A549 (cell line): ENCODE measurements at regions of chr6 and their contacts with region 1.

Region 1: DNA sequence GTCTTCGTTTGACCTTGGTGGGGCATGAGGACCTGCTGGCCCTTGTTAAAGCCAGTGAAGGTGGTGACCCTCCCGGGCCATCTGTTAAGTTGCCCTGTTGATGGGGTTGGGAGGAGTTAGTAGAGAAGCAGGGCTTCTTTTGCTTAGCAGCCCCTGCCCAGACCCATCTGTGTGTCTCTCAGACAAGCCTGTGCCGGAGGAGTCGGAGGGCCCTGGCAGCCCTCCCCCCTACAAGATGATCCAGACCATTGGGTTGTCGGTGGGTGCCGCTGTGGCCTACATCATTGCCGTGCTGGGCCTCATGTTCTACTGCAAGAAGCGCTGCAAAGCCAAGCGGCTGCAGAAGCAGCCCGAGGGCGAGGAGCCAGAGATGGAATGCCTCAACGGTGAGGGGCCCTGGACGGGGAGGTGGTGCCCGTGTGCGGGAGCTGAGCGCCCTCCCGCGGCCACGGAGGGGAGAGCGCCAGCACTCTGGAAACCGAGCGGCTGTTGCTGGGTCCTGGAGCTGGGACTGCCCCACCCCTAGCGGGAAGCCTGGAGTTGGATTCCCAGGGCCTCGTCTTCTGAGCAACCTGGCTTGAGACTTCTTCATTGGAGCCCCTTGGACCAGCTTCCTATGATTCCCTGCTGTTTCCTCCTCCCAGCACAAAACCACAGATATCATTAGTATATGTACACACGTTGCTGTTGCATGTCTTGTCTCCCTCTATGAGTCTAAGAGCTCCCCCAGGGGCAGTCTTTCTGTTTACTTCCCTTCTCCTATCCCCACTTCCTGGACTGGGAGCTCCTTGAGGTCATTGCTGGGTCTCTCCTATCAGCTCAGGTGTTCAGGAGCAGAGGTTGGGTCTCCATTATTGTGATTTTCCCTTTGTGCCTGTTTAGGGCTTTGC is 27.6 kb upstream of the SRF start:
- DNase-seq: peak; percentile 59 to 78
- ATAC-seq: peak; percentile 95 to 99
- H3K4me3 ChIP-seq: no peak overlapping the region
- H3K27ac ChIP-seq: peak overlapping the region in 1 of 2 experiments; percentile 44; a peak in 2 of 6 replicates
- H3K4me1 ChIP-seq: peaks cover 8% of the 10 kb centered on the region; the same call in 1 of the 3 replicates
- CTCF ChIP-seq: peak; percentile 76
- EP300 ChIP-seq: no peak
- POLR2A ChIP-seq: no peak
- RAD21 ChIP-seq: peak; percentile 86 to 88

Region 2: DNA sequence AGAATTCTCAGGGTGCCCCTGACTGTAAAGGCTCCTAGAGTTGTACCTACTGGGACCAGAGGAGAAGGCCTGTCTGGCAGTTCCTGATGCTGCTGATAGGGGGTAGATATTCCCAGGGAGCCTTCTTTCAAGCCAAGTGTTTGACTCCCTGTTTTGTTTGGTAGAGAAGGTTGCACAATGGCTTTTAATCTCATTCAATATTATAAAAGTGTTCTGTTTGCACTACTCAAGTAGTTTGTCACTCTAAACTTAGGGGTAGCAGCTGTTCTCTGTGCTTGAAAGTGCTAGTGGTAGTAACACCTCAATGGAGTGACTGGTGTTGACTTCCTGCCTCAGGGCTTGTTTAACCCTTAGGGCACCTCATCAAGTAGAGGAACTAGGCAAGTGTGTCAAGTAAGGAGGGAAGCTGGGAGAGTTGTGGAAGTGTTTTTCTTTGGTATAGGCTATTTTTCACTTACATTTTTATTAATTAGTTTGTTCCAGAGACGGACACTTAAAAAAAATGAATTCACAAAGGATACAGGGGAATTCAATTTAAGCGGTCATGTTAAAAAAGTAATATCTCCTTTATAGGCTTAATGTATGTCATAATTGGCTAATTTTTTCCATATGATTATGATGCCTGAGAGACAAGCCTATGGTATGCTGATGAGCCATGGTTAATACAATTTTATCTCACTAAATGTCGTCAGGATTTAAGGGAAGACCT is 323.5 kb before region 1 on chr6:
- CTCF ChIA-PET with region 1: no interaction called
- POLR2A ChIA-PET with region 1: no interaction called
- DNase-seq: peak; percentile 9 to 37
- ATAC-seq: peak; percentile 66 to 74; a peak in 3 of 6 replicates
- H3K4me3 ChIP-seq: no peak overlapping the region
- H3K27ac ChIP-seq: no peak overlapping the region
- H3K4me1 ChIP-seq: no peaks in the 10 kb centered on the region
- CTCF ChIP-seq: no peak
- EP300 ChIP-seq: no peak
- POLR2A ChIP-seq: no peak
- RAD21 ChIP-seq: no peak

Region 3: DNA sequence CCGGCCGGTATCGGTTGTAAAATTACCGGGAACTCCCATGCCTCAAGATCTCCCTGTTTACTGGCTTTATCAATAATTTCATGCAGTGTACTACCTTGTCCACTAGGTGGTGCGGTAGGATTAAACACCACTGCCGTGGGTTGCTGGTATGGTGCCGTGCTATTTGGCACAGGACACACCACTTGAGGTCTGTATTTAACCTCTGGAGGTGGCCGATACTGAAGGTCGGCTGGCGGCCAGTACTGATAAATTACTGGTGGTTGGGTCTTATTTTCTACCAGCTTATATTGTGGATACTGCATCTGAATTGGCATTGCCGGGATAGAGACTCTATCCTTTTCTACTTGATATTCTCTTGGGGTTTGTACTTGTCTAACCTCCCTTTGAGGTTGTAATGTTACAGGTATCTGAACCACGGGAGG is 241.9 kb before region 1 on chr6:
- CTCF ChIA-PET with region 1: interaction called, 21 read pairs
- POLR2A ChIA-PET with region 1: no interaction called
- DNase-seq: peak; percentile 41 to 78
- ATAC-seq: peak; percentile 89 to 96
- H3K4me3 ChIP-seq: no peak overlapping the region
- H3K27ac ChIP-seq: no peak overlapping the region
- H3K4me1 ChIP-seq: peaks cover 3% of the 10 kb centered on the region; the same call in 1 of the 3 replicates
- CTCF ChIP-seq: peak; percentile 87
- EP300 ChIP-seq: no peak
- POLR2A ChIP-seq: no peak
- RAD21 ChIP-seq: peak; percentile 89 to 94

Region 4: DNA sequence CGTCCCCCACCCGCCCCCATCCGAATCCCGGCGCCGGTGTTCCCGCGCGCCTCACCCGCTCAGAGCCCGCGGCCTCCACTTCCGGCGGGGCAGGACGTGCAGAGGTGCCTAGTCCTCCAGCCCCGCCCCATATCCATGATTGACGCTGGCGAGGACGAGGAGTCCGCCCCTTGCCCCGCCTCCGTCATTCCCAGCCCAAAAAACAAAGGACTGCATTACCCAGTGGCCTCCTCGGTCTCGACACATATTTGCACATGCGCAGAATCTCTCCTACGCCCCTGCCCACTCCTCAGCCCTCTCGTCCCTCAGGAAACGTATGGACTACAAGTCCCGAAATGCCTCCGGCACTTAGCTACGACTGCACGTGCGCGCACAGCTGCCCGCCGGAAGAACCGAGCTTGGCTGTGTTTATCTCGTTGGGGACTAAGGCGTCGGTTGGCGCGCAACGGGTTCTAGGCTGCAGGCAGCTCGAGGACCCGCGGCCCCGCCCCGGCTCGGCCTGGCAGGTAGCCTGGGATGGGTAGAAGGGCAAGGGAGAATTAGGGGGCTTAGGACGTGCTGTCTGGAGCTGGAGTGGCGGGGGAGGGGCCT is 129.5 kb before region 1 on chr6 and contains the starts of genes KLHDC3 and MEA1:
- CTCF ChIA-PET with region 1: interaction called, 69 read pairs
- POLR2A ChIA-PET with region 1: no interaction called
- DNase-seq: peak; percentile 94 to 99
- ATAC-seq: peak; percentile 94 to 96
- H3K4me3 ChIP-seq: peak within 1 kb of the TSS; percentile 92
- H3K27ac ChIP-seq: peak within 1 kb of the TSS; percentile 87 to 91
- H3K4me1 ChIP-seq: peaks cover 13% of the 10 kb centered on the region; the same call in 1 of the 3 replicates
- CTCF ChIP-seq: no peak
- EP300 ChIP-seq: no peak
- POLR2A ChIP-seq: 0 out of 2 replicates have a peak, but pooled peaks have one; percentile 36
- RAD21 ChIP-seq: no peak
- polyA plus RNA-seq, gene KLHDC3: 18.8 and 21.3 TPM in 2 replicates
- polyA plus RNA-seq, gene MEA1: 58.6 and 63.4 TPM in 2 replicates

Region 5: DNA sequence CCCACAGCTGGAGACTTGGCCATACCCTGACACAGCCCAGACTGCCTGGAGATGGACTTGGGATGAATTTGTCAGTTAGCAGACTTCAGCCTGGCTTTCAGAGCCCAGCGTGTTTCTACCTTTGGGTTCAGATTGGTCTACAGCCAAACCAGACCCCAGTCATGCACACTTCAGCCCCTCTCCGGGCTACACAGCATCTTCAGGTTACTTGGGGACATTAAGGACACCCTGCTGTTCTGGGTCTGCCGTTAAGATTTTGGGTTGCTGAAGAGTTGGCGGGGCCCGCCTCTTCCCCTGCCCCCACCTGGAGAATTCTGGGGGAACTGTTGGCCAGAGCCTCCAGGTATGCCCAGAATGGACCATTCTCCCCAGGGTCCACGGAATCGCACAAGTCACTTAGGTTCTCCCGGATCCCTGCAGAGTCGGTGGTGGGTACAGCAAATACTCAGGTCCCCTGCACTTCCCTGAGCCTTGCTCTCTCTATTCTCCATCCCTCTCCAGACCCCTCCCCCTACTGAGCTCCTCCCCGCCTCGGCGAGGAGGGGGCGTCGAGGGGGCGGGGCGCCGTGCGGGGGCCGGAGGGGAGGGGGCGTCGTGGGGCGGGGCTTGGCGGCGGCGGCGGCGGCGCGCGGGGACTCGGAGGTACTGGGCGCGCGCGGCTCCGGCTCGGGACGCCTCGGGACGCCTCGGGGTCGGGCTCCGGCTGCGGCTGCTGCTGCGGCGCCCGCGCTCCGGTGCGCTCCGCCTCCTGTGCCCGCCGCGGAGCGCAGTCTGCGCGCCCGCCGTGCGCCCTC is 67.6 kb before region 1 on chr6 and contains the start of gene PTK7:
- CTCF ChIA-PET with region 1: interaction called, 20 read pairs
- POLR2A ChIA-PET with region 1: no interaction called
- DNase-seq: peak in 1 of 2 experiments; percentile 28
- ATAC-seq: peak; percentile 77 to 82
- H3K4me3 ChIP-seq: peak within 1 kb of the TSS; percentile 54
- H3K27ac ChIP-seq: peak within 1 kb of the TSS; percentile 57 to 86
- H3K4me1 ChIP-seq: peaks cover 6% of the 10 kb centered on the region; the same call in 2 of the 3 replicates
- CTCF ChIP-seq: no peak
- EP300 ChIP-seq: no peak
- POLR2A ChIP-seq: no peak; the same call in 1 of the 2 replicates
- RAD21 ChIP-seq: no peak
- polyA plus RNA-seq, gene PTK7: 2.8 and 3.4 TPM in 2 replicates

Region 6: GRCh38 chr6:43129434-43130194 is 13.9 kb before region 1 on chr6:
- CTCF ChIA-PET with region 1: interaction called, 13 read pairs
- POLR2A ChIA-PET with region 1: no interaction called
- DNase-seq: peak; percentile 26 to 37
- ATAC-seq: peak; percentile 88 to 97
- H3K4me3 ChIP-seq: no peak overlapping the region
- H3K27ac ChIP-seq: no peak overlapping the region
- H3K4me1 ChIP-seq: no peaks in the 10 kb centered on the region
- CTCF ChIP-seq: peak; percentile 32; the same call in 2 of the 3 replicates
- EP300 ChIP-seq: no peak
- POLR2A ChIP-seq: no peak
- RAD21 ChIP-seq: peak; percentile 42 to 58; a peak in 4 of 5 replicates

Region 7: GRCh38 chr6:43188431-43188830 is 45.0 kb after region 1 on chr6:
- CTCF ChIA-PET with region 1: no interaction called
- POLR2A ChIA-PET with region 1: no interaction called
- DNase-seq: no peak
- ATAC-seq: no peak; a peak in 1 of 6 replicates
- H3K4me3 ChIP-seq: no peak overlapping the region
- H3K27ac ChIP-seq: no peak overlapping the region
- H3K4me1 ChIP-seq: no peaks in the 10 kb centered on the region; the same call in 2 of the 3 replicates
- CTCF ChIP-seq: no peak
- EP300 ChIP-seq: no peak
- POLR2A ChIP-seq: no peak
- RAD21 ChIP-seq: no peak